RWPE1 (cell line): ENCODE measurements at regions of chr11 and their contacts with region 1.

Region 1: GRCh38 chr11:112588252-112588694 is 327.6 kb upstream of the PLET1 start:
- DNase-seq: peak; percentile 78
- H3K27ac ChIP-seq: no peak overlapping the region
- CTCF ChIP-seq: peak; percentile 74

Region 2: DNA sequence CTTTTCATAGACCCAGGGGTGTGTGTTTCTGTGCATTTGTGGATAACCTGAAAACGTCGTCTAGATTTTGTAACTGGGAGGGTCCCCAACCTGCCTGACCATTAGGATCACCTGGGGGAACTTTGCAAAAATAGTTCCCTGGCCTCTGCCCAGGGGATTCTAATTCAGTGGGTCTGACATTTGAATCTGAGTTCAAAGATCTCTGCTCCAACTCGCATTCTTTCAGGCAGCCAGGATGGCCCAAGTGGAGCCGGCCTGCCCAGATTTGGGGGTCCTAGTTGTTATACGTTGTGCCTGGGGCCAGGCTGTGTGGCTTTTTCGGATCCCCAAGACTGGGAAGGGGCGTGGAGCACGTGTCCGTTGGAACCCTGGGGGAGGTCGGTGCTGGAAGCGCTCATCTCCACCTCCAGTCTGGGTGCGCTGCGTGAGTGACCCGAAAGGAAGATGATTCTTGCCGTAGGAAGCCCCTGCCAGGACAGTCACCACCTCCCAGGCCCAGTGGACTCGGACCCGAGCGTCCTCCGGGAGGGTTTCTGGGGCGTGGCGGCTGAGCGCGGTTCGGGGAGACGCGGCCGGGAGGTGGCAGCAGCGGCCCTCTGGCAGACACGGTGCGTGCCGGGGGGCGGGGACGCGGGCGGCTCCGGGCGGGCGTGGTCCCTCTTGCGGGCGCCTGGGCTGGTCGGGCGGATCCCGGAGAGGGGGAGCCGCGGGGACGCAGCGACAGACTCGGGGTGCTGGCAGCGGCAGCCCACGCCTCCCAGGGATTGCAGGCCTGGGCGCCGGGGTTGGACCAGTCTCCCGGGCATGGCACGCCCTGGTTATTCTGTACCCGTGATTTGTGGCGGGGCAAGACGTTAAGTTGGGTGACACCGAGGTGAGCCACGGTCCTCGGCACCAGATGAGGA is 298.4 kb before region 1 on chr11:
- CTCF ChIA-PET with region 1: interaction called, 12 read pairs
- POLR2A ChIA-PET with region 1: no interaction called
- DNase-seq: peak; percentile 83
- H3K27ac ChIP-seq: peak overlapping the region; percentile 66
- CTCF ChIP-seq: peak; percentile 93

Region 3: DNA sequence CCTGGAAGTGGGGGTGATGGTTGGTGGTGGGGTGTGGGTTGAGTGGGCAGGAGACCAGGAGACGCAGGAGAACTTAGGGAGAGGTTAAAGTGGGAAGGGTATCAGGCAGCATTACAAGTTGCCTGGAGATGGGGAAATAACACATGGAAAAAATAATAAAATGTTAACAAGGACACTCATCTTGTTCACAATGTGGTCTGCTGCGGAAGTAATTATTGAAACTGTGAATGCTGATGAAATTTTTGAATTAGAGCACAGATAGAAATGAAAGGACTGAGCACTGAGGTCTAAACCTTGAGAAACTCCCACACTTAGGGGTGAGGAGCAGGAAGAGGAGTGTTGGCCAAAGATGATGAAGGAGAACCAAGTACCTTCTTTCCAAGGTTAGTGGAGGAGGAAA is 18.4 kb after region 1 on chr11:
- CTCF ChIA-PET with region 1: no interaction called
- POLR2A ChIA-PET with region 1: no interaction called
- DNase-seq: no peak
- H3K27ac ChIP-seq: no peak overlapping the region
- CTCF ChIP-seq: no peak

Region 4: DNA sequence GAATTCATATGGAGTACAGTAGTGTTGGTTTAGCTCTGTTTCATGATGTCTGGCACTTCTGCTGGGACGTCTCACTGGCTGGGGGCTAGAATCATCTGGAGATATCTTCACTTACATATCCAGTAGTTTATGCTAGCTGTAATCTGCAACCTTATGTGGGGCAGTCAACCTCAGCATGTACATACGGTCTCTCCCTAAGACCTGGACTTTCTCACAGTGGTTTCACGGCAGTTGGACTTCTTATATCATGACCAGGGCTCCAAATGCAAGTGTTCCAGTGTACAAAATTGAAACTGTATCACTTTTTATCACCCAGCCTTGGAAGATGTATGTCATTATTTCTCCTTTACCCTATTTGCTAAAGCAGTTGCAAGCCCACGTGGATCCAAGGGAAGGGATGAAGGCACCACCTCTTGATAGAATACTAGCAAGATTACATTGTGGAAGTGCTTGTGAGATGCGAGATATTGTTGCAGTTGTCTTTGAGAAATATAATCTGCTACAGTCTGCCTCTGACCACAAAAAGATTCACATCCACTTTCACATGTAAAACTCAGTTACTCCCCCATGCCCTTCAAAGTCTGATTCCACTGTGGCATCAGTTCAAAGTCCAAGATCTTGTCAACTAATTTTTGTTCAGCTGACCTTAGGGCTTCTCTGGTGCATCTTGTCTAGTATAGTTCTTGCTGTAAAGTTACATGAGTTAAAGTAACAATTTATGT is 56.3 kb after region 1 on chr11:
- CTCF ChIA-PET with region 1: no interaction called
- POLR2A ChIA-PET with region 1: no interaction called
- DNase-seq: no peak
- H3K27ac ChIP-seq: no peak overlapping the region
- CTCF ChIP-seq: no peak

Region 5: GRCh38 chr11:113289431-113290187 is 701.3 kb after region 1 on chr11:
- CTCF ChIA-PET with region 1: interaction called, 33 read pairs
- POLR2A ChIA-PET with region 1: interaction called, 3 read pairs
- DNase-seq: peak; percentile 80
- H3K27ac ChIP-seq: no peak overlapping the region
- CTCF ChIP-seq: peak; percentile 88